CD14-positive monocyte (primary cell): ENCODE measurements at regions of chr3 and their contacts with region 1.

Region 1: DNA sequence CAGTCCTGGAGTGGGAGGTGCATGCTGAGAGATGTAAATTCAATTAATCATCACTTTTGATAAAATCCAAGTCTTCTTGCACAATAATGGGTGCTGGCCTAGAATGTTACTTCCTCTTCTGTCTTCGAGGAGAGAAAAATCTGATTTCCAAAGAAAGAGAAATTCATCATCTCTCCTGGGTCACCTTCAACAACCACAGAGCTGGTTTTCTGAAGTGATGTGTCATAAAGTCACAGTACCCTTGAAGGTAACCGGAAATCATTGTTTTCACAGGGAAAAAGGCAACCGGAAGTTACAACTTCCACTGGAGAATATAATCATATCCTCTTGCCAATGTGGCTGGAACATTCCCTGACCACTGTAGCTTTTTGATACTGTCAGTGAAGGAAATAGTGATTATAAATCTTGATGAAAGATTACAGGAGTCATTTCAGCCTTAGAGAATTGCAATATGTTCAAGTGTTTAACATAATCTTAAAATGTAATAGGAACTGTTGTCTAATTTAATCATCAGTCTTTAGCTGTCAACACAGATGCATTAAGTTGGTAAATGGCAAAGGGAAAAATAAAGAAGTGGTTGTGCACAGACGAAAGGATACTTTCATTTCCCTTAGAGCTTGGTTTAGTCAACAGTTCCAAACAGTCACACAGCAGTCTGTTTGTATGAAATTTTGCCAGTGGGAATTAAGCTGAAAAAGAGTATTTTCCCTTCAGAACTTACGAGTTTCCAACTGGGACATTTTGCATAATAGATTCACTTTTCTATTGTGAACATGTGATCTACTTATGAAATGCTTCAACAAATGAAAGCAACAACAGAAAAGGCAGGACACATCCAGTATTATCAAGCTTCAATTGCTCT is 106.5 kb upstream of the SLC4A7 start:
- DNase-seq: peak; percentile 78 to 94 (median 93)
- H3K4me3 ChIP-seq: peak overlapping the region in 2 of 3 experiments; percentile 7 to 46
- H3K4me3 Mint-ChIP-seq: peak overlapping the region in 1 of 2 donors; percentile 61
- H3K27ac ChIP-seq: peak overlapping the region in 1 of 2 donors; percentile 81
- H3K27ac Mint-ChIP-seq: peak overlapping the region; percentile 88 to 95 (median 92)
- H3K4me1 ChIP-seq: peaks cover 34% of the 10 kb centered on the region in 2 donors
- H3K4me1 Mint-ChIP-seq: peaks cover 31% of the 10 kb centered on the region
- H3K27me3 ChIP-seq: no peaks in the 10 kb centered on the region
- H3K27me3 Mint-ChIP-seq: peaks cover 0 to 5% (median 1%) of the 10 kb centered on the region in 3 donors
- CTCF ChIP-seq: no peak

Region 2: GRCh38 chr3:27554706-27555105 is 36.0 kb before region 1 on chr3:
- intact Hi-C with region 1: loop called in 1 of 2 experiments (anchors 5 kb)
- DNase-seq: peak; percentile 39 to 78 (median 71)
- H3K4me3 ChIP-seq: peak overlapping the region in 1 of 3 experiments; percentile 7
- H3K4me3 Mint-ChIP-seq: peak overlapping the region in 1 of 2 donors; percentile 54
- H3K27ac ChIP-seq: peak overlapping the region in 1 of 2 donors; percentile 34
- H3K27ac Mint-ChIP-seq: peak overlapping the region; percentile 63 to 88 (median 68)
- H3K4me1 ChIP-seq: peaks cover 28 to 29% of the 10 kb centered on the region in 2 donors
- H3K4me1 Mint-ChIP-seq: peaks cover 33% of the 10 kb centered on the region
- H3K27me3 ChIP-seq: no peaks in the 10 kb centered on the region
- H3K27me3 Mint-ChIP-seq: peaks cover 0 to 4% (median 2%) of the 10 kb centered on the region in 3 donors
- CTCF ChIP-seq: no peak

Region 3: GRCh38 chr3:27639271-27639670 is 48.6 kb after region 1 on chr3:
- intact Hi-C with region 1: loop called in 1 of 2 experiments (anchors 5 kb)
- DNase-seq: peak in 1 of 3 donors; percentile 12
- H3K4me3 ChIP-seq: no peak overlapping the region
- H3K4me3 Mint-ChIP-seq: no peak overlapping the region
- H3K27ac ChIP-seq: no peak overlapping the region
- H3K27ac Mint-ChIP-seq: peak overlapping the region in 1 of 7 donors; percentile 4
- H3K4me1 ChIP-seq: peaks cover 6 to 11% of the 10 kb centered on the region in 2 donors
- H3K4me1 Mint-ChIP-seq: peaks cover 16% of the 10 kb centered on the region
- H3K27me3 ChIP-seq: no peaks in the 10 kb centered on the region
- H3K27me3 Mint-ChIP-seq: peaks cover 2 to 6% (median 3%) of the 10 kb centered on the region in 3 donors
- CTCF ChIP-seq: no peak